ENCODE measurements at regions of chr2 and their contacts with region 1.

Region 1: DNA sequence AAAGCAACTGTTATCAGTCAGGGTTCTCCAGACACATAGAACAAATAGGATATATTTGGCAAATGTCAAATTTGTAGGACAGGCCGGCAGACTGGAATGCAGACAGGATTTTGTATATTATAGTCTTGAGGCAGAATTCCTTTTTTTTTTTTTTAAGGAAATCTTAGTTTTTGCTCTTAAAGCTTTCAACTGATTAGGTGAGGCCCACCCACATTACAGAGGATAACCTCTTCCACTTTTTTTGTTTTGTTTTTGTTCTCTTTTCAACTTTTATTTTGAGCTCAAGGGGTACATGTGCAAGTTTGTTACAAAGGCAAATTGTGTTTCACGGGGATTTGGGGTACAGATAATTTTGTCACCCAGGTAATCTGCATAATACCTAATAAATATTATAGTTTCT is 350.2 kb upstream of the CHAC2 start:
- DNase-seq: no peak
- H3K4me3 ChIP-seq: no peak overlapping the region
- H3K27ac ChIP-seq: no peak overlapping the region
- H3K4me1 ChIP-seq: no peaks in the 10 kb centered on the region
- H3K27me3 ChIP-seq: no peaks in the 10 kb centered on the region
- CTCF ChIP-seq: no peak

Region 2: GRCh38 chr2:53445386-53446072 is 28.1 kb after region 1 on chr2:
- intact Hi-C with region 1: loop called (anchors 1 kb)
- DNase-seq: no peak
- H3K4me3 ChIP-seq: no peak overlapping the region
- H3K27ac ChIP-seq: no peak overlapping the region
- H3K4me1 ChIP-seq: no peaks in the 10 kb centered on the region
- H3K27me3 ChIP-seq: no peaks in the 10 kb centered on the region
- CTCF ChIP-seq: no peak